ENCODE measurements at regions of chr3 and their contacts with region 1.

Region 1: DNA sequence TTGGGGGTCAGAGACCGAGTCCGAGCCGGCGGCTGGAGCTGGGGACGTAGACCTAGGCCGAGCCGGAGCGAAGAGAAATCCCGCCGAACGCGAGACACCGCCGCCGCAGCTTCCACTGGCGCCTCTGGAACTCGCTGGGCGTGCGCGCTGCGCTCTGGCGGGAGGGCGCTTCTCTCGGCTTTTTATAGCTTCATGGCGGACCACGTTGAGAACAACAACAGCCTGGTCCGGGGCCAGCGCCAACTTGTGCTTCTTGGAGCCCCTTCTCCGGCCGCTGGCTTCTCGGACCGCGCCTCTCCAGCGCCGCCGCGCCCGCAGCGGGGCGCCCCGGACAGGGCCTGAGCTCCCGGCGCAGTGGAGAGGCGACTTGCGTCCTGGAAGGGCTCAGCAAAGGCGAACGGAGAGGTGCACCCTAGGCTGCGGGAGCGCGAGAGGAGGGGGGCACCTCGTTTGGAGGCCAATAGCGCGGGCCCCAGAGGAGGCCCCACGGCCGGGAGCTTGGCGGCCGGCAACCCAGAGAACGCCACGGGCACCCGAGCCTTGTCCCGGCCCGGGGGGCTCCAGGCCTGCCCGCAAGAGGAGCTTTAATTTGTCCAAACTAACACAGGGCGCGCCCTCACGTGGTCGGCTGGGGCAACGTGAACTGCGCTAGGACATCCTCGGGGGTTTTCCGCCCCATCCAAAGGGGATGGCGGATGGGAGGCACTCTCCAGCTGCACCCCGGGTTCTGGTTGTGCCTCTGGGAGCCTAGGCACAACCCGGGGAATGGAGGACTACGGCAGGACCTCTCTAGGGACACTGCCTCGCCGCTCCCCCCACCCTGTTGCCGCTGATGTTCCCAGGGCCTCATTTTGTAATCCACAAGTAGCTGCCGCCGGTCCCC is 37.7 kb downstream of the HMCES start:
- DNase-seq: peak; percentile 82 to 89 (median 85)
- H3K4me3 ChIP-seq: peak overlapping the region; percentile 81 to 86
- H3K4me3 Mint-ChIP-seq: peak overlapping the region; percentile 79 to 96 (median 89)
- H3K27ac ChIP-seq: peak overlapping the region; percentile 74
- H3K27ac Mint-ChIP-seq: peak overlapping the region; percentile 70 to 92 (median 87)
- H3K4me1 ChIP-seq: peaks cover 37% of the 10 kb centered on the region
- H3K4me1 Mint-ChIP-seq: peaks cover 13 to 30% (median 19%) of the 10 kb centered on the region in 4 donors
- H3K27me3 ChIP-seq: no peaks in the 10 kb centered on the region
- H3K27me3 Mint-ChIP-seq: no peaks in the 10 kb centered on the region

Region 2: GRCh38 chr3:128993461-128994173 is 322.8 kb before region 1 on chr3 and contains the start of gene CFAP92:
- CTCF ChIA-PET with region 1: no interaction called
- POLR2A ChIA-PET with region 1: interaction called, 11 read pairs
- intact Hi-C with region 1: no loop called
- DNase-seq: peak; percentile 89 to 92 (median 91)
- H3K4me3 ChIP-seq: peak within 1 kb of the TSS in 1 of 2 donors; percentile 42
- H3K4me3 Mint-ChIP-seq: peak within 1 kb of the TSS; percentile 68 to 85 (median 78)
- H3K27ac ChIP-seq: peak within 1 kb of the TSS; percentile 40
- H3K27ac Mint-ChIP-seq: peak within 1 kb of the TSS; percentile 30 to 91 (median 83)
- H3K4me1 ChIP-seq: peaks cover 14% of the 10 kb centered on the region
- H3K4me1 Mint-ChIP-seq: peaks cover 5 to 28% (median 16%) of the 10 kb centered on the region in 4 donors
- H3K27me3 ChIP-seq: no peaks in the 10 kb centered on the region
- H3K27me3 Mint-ChIP-seq: no peaks in the 10 kb centered on the region
- total RNA-seq, gene CFAP92: 0.38 TPM in 1 of 2 experiments, not detected in the other

Region 3: GRCh38 chr3:129026728-129027543 is 289.4 kb before region 1 on chr3:
- CTCF ChIA-PET with region 1: interaction called, 4 read pairs
- POLR2A ChIA-PET with region 1: interaction called, 15 read pairs
- intact Hi-C with region 1: no loop called
- DNase-seq: peak; percentile 91 to 95 (median 94)
- H3K4me3 ChIP-seq: peak overlapping the region; percentile 42 to 57
- H3K4me3 Mint-ChIP-seq: peak overlapping the region; percentile 76 to 88 (median 85)
- H3K27ac ChIP-seq: peak overlapping the region; percentile 55
- H3K27ac Mint-ChIP-seq: peak overlapping the region; percentile 91 to 97 (median 97)
- H3K4me1 ChIP-seq: peaks cover 16% of the 10 kb centered on the region
- H3K4me1 Mint-ChIP-seq: peaks cover 10 to 25% (median 16%) of the 10 kb centered on the region in 4 donors
- H3K27me3 ChIP-seq: no peaks in the 10 kb centered on the region
- H3K27me3 Mint-ChIP-seq: no peaks in the 10 kb centered on the region

Region 4: GRCh38 chr3:129160891-129161859 is 155.2 kb before region 1 on chr3 and contains the start of gene ISY1:
- CTCF ChIA-PET with region 1: interaction called, 6 read pairs
- POLR2A ChIA-PET with region 1: interaction called, 22 read pairs
- intact Hi-C with region 1: no loop called
- DNase-seq: peak; percentile 90 to 93 (median 92)
- H3K4me3 ChIP-seq: peak within 1 kb of the TSS; percentile 75 to 94
- H3K4me3 Mint-ChIP-seq: peak within 1 kb of the TSS; percentile 96 to 100 (median 97)
- H3K27ac ChIP-seq: peak within 1 kb of the TSS; percentile 97
- H3K27ac Mint-ChIP-seq: peak within 1 kb of the TSS; percentile 98 to 100 (median 99)
- H3K4me1 ChIP-seq: peaks cover 23% of the 10 kb centered on the region
- H3K4me1 Mint-ChIP-seq: peaks cover 24 to 59% (median 37%) of the 10 kb centered on the region in 4 donors
- H3K27me3 ChIP-seq: no peaks in the 10 kb centered on the region
- H3K27me3 Mint-ChIP-seq: no peaks in the 10 kb centered on the region
- total RNA-seq, gene ISY1: 29.5 to 34.3 TPM

Region 5: DNA sequence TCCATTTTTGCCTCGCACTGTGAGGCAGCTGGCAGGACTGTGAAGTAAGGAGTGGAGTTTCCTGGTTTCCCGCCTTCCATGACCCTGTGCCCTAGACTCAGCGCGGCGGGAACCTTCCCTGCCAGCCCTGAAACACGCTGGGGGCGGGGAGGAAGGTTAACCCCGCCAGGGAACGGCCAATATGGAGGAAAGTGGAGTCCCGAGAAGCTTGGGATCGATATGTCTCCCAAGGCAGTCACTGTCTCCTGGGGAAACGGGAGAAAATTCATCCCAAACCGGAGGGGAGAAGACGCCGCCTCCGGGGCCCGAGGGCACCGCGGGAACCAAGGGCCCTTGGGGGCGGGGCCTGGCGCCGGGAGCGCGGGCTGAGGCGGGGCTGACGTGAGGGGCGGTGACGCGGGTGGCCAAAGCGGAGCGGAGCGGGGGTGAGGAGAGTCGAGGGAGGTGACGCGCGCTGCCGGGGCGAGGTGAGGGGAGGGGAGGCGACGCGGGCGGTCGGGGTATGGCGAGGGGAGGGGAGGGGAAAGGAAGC is 37.9 kb before region 1 on chr3 and contains the start of gene HMCES:
- CTCF ChIA-PET with region 1: interaction called, 22 read pairs
- POLR2A ChIA-PET with region 1: interaction called, 315 read pairs
- intact Hi-C with region 1: loop called (anchors 1 kb)
- DNase-seq: peak; percentile 93 to 97 (median 95)
- H3K4me3 ChIP-seq: peak within 1 kb of the TSS; percentile 69 to 85
- H3K4me3 Mint-ChIP-seq: peak within 1 kb of the TSS; percentile 94 to 99 (median 98)
- H3K27ac ChIP-seq: peak within 1 kb of the TSS; percentile 99
- H3K27ac Mint-ChIP-seq: peak within 1 kb of the TSS; percentile 90 to 100 (median 99)
- H3K4me1 ChIP-seq: peaks cover 44% of the 10 kb centered on the region
- H3K4me1 Mint-ChIP-seq: peaks cover 22 to 50% (median 38%) of the 10 kb centered on the region in 4 donors
- H3K27me3 ChIP-seq: no peaks in the 10 kb centered on the region
- H3K27me3 Mint-ChIP-seq: no peaks in the 10 kb centered on the region
- total RNA-seq, gene HMCES: 50.1 to 52.5 TPM

Region 6: DNA sequence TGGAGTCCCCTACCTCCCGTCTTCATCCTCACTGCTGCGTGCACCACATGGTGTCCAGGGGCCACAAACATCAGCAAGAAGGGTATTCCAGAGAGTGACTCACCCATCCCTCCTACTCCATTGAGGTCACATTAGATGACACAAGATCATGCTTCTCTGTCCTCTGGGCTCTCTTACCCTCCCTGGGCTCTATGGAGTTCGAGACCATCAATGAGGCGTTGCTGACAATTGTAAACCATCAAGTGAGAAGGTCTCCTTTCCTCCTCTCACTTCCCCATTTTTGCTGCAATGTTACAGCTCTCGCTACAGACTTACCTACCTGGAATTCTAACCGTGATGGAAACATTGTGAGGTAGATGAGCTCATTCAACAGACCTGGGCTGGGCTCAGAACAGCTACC is 14.0 kb after region 1 on chr3:
- CTCF ChIA-PET with region 1: interaction called, 14 read pairs
- POLR2A ChIA-PET with region 1: interaction called, 37 read pairs
- intact Hi-C with region 1: no loop called
- DNase-seq: no peak
- H3K4me3 ChIP-seq: no peak overlapping the region
- H3K4me3 Mint-ChIP-seq: no peak overlapping the region
- H3K27ac ChIP-seq: no peak overlapping the region
- H3K27ac Mint-ChIP-seq: no peak overlapping the region
- H3K4me1 ChIP-seq: no peaks in the 10 kb centered on the region
- H3K4me1 Mint-ChIP-seq: no peaks in the 10 kb centered on the region
- H3K27me3 ChIP-seq: no peaks in the 10 kb centered on the region
- H3K27me3 Mint-ChIP-seq: no peaks in the 10 kb centered on the region

Region 7: GRCh38 chr3:129576514-129577352 is 260.4 kb after region 1 on chr3:
- CTCF ChIA-PET with region 1: interaction called, 3 read pairs
- POLR2A ChIA-PET with region 1: interaction called, 22 read pairs
- intact Hi-C with region 1: no loop called
- DNase-seq: peak; percentile 84 to 90 (median 89)
- H3K4me3 ChIP-seq: peak overlapping the region in 1 of 2 donors; percentile 12
- H3K4me3 Mint-ChIP-seq: peak overlapping the region in 7 of 8 donors; percentile 53 to 79 (median 71)
- H3K27ac ChIP-seq: peak overlapping the region; percentile 67
- H3K27ac Mint-ChIP-seq: peak overlapping the region; percentile 90 to 98 (median 98)
- H3K4me1 ChIP-seq: peaks cover 54% of the 10 kb centered on the region
- H3K4me1 Mint-ChIP-seq: peaks cover 17 to 58% (median 39%) of the 10 kb centered on the region in 4 donors
- H3K27me3 ChIP-seq: no peaks in the 10 kb centered on the region
- H3K27me3 Mint-ChIP-seq: no peaks in the 10 kb centered on the region

Measured in CD4-positive, alpha-beta memory T cell (primary cell).